ENCODE measurements at regions of chr14 and their contacts with region 1.

Region 1: DNA sequence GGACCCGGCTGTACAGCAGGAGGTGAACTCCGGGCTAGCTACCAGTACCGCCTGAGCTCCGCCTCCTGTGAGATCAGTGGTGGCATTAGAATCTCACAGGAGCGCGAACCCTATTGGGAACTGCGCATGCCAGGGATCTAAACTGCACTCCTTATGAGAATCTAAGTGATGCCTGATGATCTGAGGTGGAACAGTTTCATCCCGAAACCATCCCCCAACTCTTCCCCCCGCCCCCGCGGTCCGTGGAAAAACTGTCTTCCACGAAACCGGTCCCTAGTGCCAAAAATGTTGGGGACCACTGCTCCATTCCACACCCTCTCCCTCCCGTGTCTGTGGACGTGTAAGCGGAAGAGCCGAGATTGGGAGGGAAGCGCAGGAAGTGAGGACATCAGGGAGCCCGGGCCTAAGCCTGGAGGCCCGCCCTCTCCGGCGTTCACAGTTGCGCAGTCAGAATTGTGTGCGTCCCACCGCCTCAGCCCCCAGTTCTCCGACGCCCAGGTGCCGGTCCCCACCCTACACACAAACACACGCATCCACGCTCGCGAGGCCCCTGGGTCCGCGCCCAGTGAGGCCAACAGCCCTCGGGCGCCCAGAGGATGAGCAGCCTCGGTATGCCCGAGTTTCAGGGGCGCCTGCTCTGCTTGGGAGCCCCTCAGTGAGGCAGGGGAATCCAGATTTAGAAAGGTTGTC is 1.8 kb upstream of the RNASE4 start:
- DNase-seq: peak; percentile 86
- ATAC-seq: peak; percentile 69
- H3K4me3 Mint-ChIP-seq: no peak overlapping the region
- H3K27ac Mint-ChIP-seq: no peak overlapping the region
- H3K4me1 Mint-ChIP-seq: peaks cover 19% of the 10 kb centered on the region
- H3K27me3 Mint-ChIP-seq: no peaks in the 10 kb centered on the region
- CTCF ChIP-seq: no peak

Region 2: GRCh38 chr14:20118795-20119194 is 563.8 kb before region 1 on chr14:
- CTCF ChIA-PET with region 1: no interaction called
- POLR2A ChIA-PET with region 1: no interaction called
- intact Hi-C with region 1: no loop called
- DNase-seq: no peak
- ATAC-seq: no peak
- H3K4me3 Mint-ChIP-seq: no peak overlapping the region
- H3K27ac Mint-ChIP-seq: no peak overlapping the region
- H3K4me1 Mint-ChIP-seq: no peaks in the 10 kb centered on the region
- H3K27me3 Mint-ChIP-seq: peaks cover 15% of the 10 kb centered on the region
- CTCF ChIP-seq: no peak

Region 3: GRCh38 chr14:20327005-20327869 is 355.3 kb before region 1 on chr14:
- CTCF ChIA-PET with region 1: interaction called, 30 read pairs
- POLR2A ChIA-PET with region 1: no interaction called
- intact Hi-C with region 1: no loop called
- DNase-seq: peak; percentile 13
- ATAC-seq: peak; percentile 53
- H3K4me3 Mint-ChIP-seq: peak overlapping the region; percentile 0
- H3K27ac Mint-ChIP-seq: peak overlapping the region; percentile 41
- H3K4me1 Mint-ChIP-seq: peaks cover 36% of the 10 kb centered on the region
- H3K27me3 Mint-ChIP-seq: no peaks in the 10 kb centered on the region
- CTCF ChIP-seq: peak; percentile 87

Region 4: DNA sequence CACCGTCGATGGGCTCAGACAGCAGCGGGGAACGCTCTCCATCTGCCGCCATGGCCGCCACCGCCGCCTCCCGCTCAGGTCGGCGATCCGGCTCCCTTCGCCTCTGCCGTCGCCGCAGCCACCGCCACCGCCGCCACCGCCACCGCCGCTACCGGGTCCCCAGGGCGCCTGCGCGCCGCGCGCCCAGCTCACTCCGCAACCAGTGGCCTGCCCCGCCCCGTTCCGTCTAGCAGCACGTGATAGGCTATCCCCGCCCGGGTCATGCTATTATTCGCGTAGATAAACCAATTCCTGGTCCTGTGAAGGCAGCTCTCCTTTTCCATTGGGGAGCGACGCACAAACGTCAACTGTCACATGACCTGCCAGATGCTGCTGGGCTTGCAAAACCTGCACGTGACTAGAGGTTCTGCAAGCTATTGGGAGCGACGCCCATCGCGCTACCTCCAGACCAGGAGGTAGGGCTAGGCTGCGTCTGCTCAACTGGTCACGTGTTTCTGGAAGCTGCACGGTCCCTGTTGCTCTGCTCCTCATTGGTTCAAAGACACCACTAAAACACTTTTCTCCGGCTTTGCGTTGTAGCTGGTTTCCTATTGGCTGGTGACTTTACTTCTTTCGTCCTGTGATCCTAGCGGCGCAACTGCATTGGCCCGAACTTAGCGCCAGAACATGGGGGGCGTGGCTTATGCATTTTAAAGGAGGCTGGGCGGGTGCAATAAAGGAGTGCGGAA is 221.1 kb before region 1 on chr14 and contains the start of gene PIP4P1:
- CTCF ChIA-PET with region 1: no interaction called
- POLR2A ChIA-PET with region 1: interaction called, 3 read pairs
- intact Hi-C with region 1: loop called (anchors 5 kb)
- DNase-seq: peak; percentile 99
- ATAC-seq: peak; percentile 95
- H3K4me3 Mint-ChIP-seq: peak within 1 kb of the TSS; percentile 90
- H3K27ac Mint-ChIP-seq: peak within 1 kb of the TSS; percentile 98
- H3K4me1 Mint-ChIP-seq: peaks cover 26% of the 10 kb centered on the region
- H3K27me3 Mint-ChIP-seq: no peaks in the 10 kb centered on the region
- CTCF ChIP-seq: no peak
- total RNA-seq, gene PIP4P1: 21.0 to 27.3 TPM

Region 5: DNA sequence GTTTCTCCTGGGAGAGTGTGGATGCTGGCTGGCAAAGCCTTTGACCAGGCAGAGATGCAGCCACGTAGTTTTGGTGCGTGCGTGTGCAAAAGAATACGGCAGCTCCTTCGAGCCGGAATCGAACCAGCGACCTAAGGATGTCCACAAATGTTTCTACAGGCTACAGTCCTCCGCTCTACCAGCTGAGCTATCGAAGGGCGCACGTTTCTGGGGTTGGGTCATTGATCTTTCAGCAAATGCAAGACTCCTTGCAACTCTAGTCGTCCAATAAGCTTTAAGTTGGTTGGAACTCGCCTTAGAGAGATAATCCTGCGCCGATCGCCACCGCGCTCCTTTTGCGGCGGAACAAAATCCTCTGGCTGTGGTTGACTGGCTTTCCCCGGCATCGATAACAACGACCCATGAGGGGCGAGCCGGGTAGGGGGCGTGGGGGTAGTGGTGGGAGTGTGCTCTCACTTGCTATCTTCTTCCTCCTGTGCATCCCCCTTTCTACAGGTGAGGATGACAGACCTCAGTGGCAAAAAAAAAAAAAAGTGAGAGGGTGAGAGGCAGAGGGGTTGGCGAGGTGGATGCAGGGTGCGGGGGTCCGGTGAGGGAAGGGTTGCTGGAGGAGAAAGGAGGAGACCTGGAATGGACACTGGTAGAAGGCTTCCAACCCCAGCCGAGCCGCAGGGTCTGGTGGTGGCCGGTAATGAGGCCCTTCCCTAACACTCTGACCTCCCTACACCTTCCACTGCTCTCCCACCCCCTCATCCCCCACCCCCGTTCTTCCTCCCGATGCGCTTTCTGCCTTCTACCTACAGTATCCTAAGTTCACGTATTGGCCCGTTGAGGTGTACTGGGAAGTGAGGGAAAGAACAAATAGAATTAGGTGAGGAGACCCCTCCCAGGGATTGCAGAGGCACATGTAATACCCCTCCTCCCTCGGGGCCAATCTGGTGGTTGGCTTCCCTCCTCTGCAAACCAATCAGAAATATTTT is 29.3 kb before region 1 on chr14:
- CTCF ChIA-PET with region 1: interaction called, 53 read pairs
- POLR2A ChIA-PET with region 1: interaction called, 4 read pairs
- intact Hi-C with region 1: no loop called
- DNase-seq: peak; percentile 86
- ATAC-seq: peak; percentile 86
- H3K4me3 Mint-ChIP-seq: peak overlapping the region; percentile 65
- H3K27ac Mint-ChIP-seq: no peak overlapping the region
- H3K4me1 Mint-ChIP-seq: peaks cover 19% of the 10 kb centered on the region
- H3K27me3 Mint-ChIP-seq: peaks cover 58% of the 10 kb centered on the region
- CTCF ChIP-seq: no peak

Region 6: DNA sequence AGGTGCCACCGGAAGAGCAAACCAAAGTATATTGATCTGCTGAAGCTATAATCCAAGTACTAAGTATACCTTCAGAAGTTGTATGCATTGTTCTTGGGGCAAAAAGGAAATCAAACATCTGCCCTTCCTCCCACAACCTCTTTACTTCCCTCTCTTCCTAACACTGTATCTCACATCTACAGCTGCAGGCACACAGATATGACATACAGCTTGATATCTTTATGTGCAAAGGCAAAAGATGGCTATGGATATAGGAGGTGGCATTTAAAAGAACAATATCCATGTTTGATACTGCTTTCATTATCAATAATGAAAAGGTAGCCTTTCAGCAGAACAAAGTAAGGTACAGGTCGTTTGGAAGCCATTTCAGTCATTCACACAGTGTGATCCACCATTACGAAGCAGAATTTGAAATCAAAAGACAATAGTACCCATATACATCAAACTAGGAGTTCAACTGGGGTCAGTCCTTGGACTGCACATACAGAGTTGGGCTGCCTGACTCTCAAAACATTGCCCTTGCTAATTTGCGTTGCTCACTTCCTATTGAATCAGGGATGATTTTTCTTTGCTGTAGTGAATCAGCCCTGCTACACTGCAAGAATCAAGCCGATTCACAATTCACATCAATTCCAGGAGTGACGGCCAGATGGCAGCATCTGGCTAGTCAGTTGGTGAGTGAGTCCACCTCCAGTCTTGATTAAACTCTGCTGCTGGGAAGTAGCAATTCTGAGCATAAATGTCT is 14.9 kb after region 1 on chr14:
- CTCF ChIA-PET with region 1: interaction called, 38 read pairs
- POLR2A ChIA-PET with region 1: no interaction called
- intact Hi-C with region 1: no loop called
- DNase-seq: peak; percentile 78
- ATAC-seq: peak; percentile 93
- H3K4me3 Mint-ChIP-seq: no peak overlapping the region
- H3K27ac Mint-ChIP-seq: no peak overlapping the region
- H3K4me1 Mint-ChIP-seq: peaks cover under 1% of the 10 kb centered on the region
- H3K27me3 Mint-ChIP-seq: peaks cover 4% of the 10 kb centered on the region
- CTCF ChIP-seq: peak; percentile 75